Activated CD4-positive, alpha-beta memory T cell treated with anti-CD3 and anti-CD28 coated beads for 36 hours (primary cell): ENCODE measurements at regions of chr5 and their contacts with region 1.

Region 1: GRCh38 chr5:35852084-35852734 is 4.5 kb upstream of the IL7R start:
- DNase-seq: peak; percentile 75
- H3K4me3 Mint-ChIP-seq: peak overlapping the region; percentile 93
- H3K27ac Mint-ChIP-seq: peak overlapping the region; percentile 100
- H3K4me1 Mint-ChIP-seq: peaks cover 75% of the 10 kb centered on the region
- H3K27me3 Mint-ChIP-seq: no peaks in the 10 kb centered on the region

Region 2: DNA sequence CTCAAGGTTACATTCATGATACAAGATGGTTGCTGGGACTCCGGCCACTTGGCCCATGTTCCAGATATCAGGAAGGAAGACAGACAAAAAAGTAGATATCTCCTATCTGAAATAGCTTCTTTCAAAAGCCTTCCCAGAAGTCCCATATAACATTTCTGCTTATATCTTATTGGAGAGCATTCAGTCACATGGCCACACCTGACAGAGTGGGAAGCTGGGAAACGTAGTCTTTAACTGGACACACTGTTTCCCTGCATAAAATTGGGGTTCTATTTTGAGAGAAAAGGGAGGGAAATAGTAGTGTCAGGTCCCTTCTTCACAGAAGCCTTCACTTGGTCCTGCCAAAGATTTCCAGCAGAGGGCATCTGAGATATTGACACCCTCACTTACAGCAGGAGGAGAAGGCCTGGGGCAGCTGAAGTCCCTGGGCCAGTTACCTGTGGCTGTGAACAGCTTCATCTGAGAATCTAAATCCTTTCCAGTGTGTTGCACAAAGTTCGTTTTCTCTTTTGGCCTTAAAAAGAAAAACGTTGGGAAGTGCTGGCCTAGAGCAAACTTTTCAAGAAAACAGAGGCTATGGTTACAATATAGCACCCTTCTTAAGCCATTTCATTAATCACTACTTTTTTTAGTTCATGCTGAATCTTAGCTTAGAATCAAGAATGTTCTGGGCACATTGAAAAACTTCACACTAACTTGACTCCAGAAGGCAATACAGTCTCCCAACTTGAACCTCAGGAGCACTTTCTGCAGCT is 201.0 kb before region 1 on chr5:
- CTCF ChIA-PET with region 1: interaction called, 7 read pairs
- POLR2A ChIA-PET with region 1: interaction called, 3 read pairs
- intact Hi-C with region 1: loop called (anchors 2 kb)
- DNase-seq: peak; percentile 74
- H3K4me3 Mint-ChIP-seq: no peak overlapping the region
- H3K27ac Mint-ChIP-seq: no peak overlapping the region
- H3K4me1 Mint-ChIP-seq: peaks cover 10% of the 10 kb centered on the region
- H3K27me3 Mint-ChIP-seq: no peaks in the 10 kb centered on the region

Region 3: GRCh38 chr5:35777358-35778087 is 74.7 kb before region 1 on chr5:
- CTCF ChIA-PET with region 1: interaction called, 42 read pairs
- POLR2A ChIA-PET with region 1: interaction called, 10 read pairs
- intact Hi-C with region 1: loop called (anchors 1 kb)
- DNase-seq: peak; percentile 73
- H3K4me3 Mint-ChIP-seq: peak overlapping the region; percentile 59
- H3K27ac Mint-ChIP-seq: peak overlapping the region; percentile 89
- H3K4me1 Mint-ChIP-seq: peaks cover 79% of the 10 kb centered on the region
- H3K27me3 Mint-ChIP-seq: no peaks in the 10 kb centered on the region

Region 4: DNA sequence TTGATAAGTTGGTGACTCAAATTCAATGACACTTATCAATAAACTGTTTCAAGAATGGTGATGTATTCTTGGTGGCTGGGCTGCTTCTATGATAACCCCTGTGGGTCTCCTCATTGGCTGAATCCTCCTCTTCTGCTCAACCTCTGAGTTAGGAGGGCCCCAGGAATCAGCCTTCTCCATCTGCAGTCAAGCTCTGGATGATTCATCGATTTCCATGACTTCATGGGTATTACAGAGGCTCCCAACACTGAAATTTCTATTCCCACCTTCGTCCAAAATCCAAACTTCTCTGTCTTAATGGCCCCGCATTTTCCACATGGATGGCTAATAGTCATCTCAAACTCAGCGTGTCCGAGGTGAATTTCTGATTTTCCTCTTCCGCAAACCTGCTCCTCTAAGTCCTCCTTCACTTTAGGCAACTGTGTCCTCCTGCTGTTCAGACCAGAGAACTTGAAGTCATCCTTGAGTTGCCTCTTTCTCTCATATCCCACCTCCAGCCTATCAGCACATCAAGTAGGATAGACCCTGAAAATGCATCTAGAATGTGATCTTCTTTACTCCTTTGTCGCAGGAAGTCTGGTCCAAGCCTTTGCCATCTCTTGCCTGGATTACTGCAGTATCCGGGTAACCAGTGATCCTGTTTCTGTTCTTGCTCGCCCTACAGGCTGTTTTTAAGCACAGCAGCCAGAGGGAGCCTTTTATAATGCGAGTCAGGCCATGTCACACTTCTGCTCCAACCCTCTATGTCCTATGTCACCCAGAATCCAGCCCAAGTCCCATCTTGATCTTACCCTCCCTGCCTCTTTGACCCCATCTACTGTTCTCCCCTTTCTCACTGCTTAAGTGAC is 36.9 kb before region 1 on chr5:
- CTCF ChIA-PET with region 1: interaction called, 4 read pairs
- POLR2A ChIA-PET with region 1: interaction called, 19 read pairs
- intact Hi-C with region 1: loop called (anchors 1 kb)
- DNase-seq: peak; percentile 71
- H3K4me3 Mint-ChIP-seq: no peak overlapping the region
- H3K27ac Mint-ChIP-seq: no peak overlapping the region
- H3K4me1 Mint-ChIP-seq: peaks cover 52% of the 10 kb centered on the region
- H3K27me3 Mint-ChIP-seq: no peaks in the 10 kb centered on the region

Region 5: GRCh38 chr5:35838370-35839042 is 13.7 kb before region 1 on chr5:
- CTCF ChIA-PET with region 1: interaction called, 9 read pairs
- POLR2A ChIA-PET with region 1: interaction called, 160 read pairs
- intact Hi-C with region 1: loop called (anchors 1 kb)
- DNase-seq: peak; percentile 76
- H3K4me3 Mint-ChIP-seq: peak overlapping the region; percentile 50
- H3K27ac Mint-ChIP-seq: peak overlapping the region; percentile 96
- H3K4me1 Mint-ChIP-seq: peaks cover 70% of the 10 kb centered on the region
- H3K27me3 Mint-ChIP-seq: no peaks in the 10 kb centered on the region

Region 6: GRCh38 chr5:35902046-35902676 is 50.0 kb after region 1 on chr5:
- CTCF ChIA-PET with region 1: interaction called, 6 read pairs
- POLR2A ChIA-PET with region 1: interaction called, 7 read pairs
- intact Hi-C with region 1: loop called (anchors 1 kb)
- DNase-seq: peak; percentile 44
- H3K4me3 Mint-ChIP-seq: peak overlapping the region; percentile 41
- H3K27ac Mint-ChIP-seq: peak overlapping the region; percentile 79
- H3K4me1 Mint-ChIP-seq: peaks cover 77% of the 10 kb centered on the region
- H3K27me3 Mint-ChIP-seq: no peaks in the 10 kb centered on the region

Region 7: DNA sequence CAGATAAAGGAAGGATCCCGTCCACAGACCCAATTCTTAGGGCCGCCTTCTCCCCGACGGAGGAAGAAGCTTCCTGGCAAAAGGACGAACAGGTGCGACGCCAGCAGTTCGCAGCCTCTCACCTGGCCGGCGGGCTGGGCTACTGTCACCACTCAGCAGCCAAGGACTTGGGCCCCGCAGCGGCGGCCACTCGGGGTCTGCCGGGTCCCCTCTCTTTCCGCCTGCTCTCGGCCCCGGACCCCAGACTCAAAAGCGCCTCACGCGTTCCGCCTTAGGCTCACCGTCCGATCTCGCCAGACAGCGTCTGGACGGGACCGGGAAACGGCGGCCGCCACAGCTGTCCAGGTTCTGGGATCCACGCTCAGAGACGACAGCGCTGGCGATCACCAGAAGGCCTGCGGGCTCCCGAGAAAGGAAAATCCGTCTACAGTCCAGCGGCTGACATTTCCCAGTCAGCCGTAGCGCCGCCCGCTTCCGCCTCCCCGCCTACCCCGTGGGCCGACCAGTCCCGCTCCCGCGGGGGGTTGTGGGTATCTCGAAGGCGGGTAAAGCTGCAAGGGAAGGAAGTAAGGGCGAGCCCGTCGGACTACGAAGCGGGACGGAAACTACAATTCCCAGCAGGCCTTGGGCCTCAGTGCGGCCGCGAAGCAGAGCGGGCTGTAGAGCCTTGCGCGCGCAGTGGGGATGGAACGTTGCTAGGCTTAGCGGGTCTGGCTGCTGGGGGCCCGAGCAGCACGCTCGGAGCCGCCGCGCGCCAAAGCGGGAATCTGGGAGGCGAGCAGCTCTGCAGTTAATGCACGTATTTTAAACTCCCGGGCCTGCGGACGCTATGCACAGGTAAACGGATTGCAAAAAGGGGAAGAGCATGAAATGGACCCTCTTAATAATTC is 299.5 kb after region 1 on chr5 and contains the starts of genes LMBRD2 and SKP2:
- CTCF ChIA-PET with region 1: no interaction called
- POLR2A ChIA-PET with region 1: no interaction called
- intact Hi-C with region 1: loop called (anchors 10 kb)
- DNase-seq: peak; percentile 98
- H3K4me3 Mint-ChIP-seq: peak within 1 kb of the TSS; percentile 95
- H3K27ac Mint-ChIP-seq: peak within 1 kb of the TSS; percentile 84
- H3K4me1 Mint-ChIP-seq: peaks cover 62% of the 10 kb centered on the region
- H3K27me3 Mint-ChIP-seq: no peaks in the 10 kb centered on the region
- total RNA-seq, gene LMBRD2: 8.1 to 10.0 TPM
- total RNA-seq, gene SKP2: 33.1 to 34.7 TPM